IMR-90 (cell line): ENCODE measurements at regions of chr20 and their contacts with region 1.

Region 1: GRCh38 chr20:6178537-6178936 is 55.7 kb upstream of the FERMT1 start:
- DNase-seq: peak; percentile 51
- ATAC-seq: peak; percentile 56
- H3K4me3 ChIP-seq: no peak overlapping the region
- H3K27ac ChIP-seq: no peak overlapping the region
- H3K4me1 ChIP-seq: no peaks in the 10 kb centered on the region
- H3K27me3 ChIP-seq: no peaks in the 10 kb centered on the region; the same call in 1 of the 2 replicates
- CTCF ChIP-seq: peak; percentile 61
- POLR2A ChIP-seq: no peak
- RAD21 ChIP-seq: peak; percentile 62

Region 2: GRCh38 chr20:5652626-5653553 is 525.6 kb before region 1 on chr20:
- CTCF ChIA-PET with region 1: no interaction called
- POLR2A ChIA-PET with region 1: no interaction called
- dilution Hi-C with region 1: no loop called
- in situ Hi-C with region 1: no loop called
- intact Hi-C with region 1: no loop called
- DNase-seq: peak; percentile 98
- ATAC-seq: peak; percentile 25
- H3K4me3 ChIP-seq: no peak overlapping the region
- H3K27ac ChIP-seq: peak overlapping the region; percentile 85
- H3K4me1 ChIP-seq: peaks cover 25% of the 10 kb centered on the region
- H3K27me3 ChIP-seq: no peaks in the 10 kb centered on the region
- CTCF ChIP-seq: no peak
- POLR2A ChIP-seq: no peak
- RAD21 ChIP-seq: no peak

Region 3: DNA sequence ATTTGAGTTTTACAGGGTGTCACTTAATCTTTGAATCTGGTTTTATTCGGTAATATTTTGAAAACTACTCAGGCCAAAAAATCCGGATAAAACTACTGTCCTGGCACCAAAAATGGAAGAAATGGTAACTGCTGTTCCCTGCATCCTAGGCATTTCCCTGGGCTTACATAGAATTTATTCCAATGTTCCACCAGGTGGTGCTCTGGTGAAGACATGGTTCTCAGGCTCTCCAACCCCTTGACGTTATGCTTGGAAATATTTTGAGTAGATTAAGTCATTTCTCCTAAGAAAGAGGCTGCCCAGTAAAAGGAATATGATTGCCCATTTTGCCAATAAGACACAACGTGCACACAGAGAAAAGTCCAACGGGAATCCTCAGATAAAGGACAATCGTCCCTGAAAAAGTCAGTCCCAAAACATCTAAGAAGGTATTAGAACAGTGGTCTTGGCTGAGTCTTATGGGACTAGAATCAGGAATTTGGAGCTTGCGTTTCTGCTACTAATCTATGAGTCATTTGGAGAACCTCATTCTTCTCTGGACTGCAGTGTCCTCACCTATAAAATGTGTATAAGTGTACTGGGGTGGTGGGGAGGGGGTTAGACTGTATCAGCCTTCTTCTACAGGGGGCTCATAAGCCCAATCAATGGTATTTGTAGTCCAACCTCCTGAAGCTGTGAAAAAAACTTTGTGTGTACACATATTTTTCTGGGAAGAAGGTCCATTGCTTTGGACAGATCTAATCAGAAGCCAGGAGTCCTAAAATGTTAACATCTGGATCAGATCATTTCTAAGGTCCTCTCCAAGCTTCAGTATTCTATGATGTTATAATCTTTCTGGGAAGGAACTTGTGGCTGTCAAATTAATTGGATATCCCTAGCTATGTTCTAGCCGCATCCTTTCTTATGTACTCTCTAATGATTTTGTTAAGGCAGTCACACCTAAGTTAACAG is 457.9 kb after region 1 on chr20:
- CTCF ChIA-PET with region 1: no interaction called
- POLR2A ChIA-PET with region 1: no interaction called
- dilution Hi-C with region 1: no loop called
- in situ Hi-C with region 1: no loop called
- intact Hi-C with region 1: loop called (anchors 5 kb)
- DNase-seq: peak; percentile 69
- ATAC-seq: peak; percentile 87
- H3K4me3 ChIP-seq: no peak overlapping the region
- H3K27ac ChIP-seq: no peak overlapping the region
- H3K4me1 ChIP-seq: no peaks in the 10 kb centered on the region
- H3K27me3 ChIP-seq: peaks cover 8% of the 10 kb centered on the region
- CTCF ChIP-seq: peak; percentile 66
- POLR2A ChIP-seq: no peak
- RAD21 ChIP-seq: peak; percentile 64

Region 4: DNA sequence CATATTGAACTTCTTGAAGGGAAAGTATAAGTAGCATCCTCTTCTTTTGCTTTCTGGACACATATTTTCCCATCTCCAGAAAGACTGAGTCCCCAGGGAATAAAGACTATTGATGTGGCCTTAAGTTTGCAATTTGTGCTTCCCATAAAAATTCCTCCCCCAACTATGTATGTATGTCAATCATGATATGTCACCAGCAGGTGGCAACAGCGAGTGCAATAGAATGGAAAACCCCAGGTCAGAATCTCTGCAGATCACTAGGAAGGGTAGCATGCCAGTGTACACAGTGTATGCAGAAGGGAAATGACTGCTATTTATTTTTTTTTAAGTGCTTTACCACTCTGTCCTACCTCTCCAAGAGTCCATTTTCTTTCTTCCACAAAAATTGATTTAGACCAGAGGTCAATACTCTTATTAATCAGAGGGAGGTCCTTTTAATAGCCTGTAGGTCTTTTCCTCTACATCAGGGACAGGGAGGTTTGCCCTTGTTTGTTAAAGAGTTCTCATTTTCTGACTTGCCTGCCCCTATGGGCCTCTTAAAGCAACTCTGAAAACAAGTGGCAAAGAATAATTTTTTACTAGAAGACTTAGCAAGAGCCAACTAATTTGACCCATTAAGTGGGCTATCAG is 650.4 kb after region 1 on chr20:
- CTCF ChIA-PET with region 1: no interaction called
- POLR2A ChIA-PET with region 1: no interaction called
- dilution Hi-C with region 1: no loop called
- in situ Hi-C with region 1: no loop called
- intact Hi-C with region 1: loop called (anchors 10 kb)
- DNase-seq: peak; percentile 43
- ATAC-seq: peak; percentile 85
- H3K4me3 ChIP-seq: no peak overlapping the region
- H3K27ac ChIP-seq: no peak overlapping the region
- H3K4me1 ChIP-seq: no peaks in the 10 kb centered on the region
- H3K27me3 ChIP-seq: no peaks in the 10 kb centered on the region
- CTCF ChIP-seq: peak; percentile 63
- POLR2A ChIP-seq: no peak
- RAD21 ChIP-seq: peak; percentile 46

Region 5: DNA sequence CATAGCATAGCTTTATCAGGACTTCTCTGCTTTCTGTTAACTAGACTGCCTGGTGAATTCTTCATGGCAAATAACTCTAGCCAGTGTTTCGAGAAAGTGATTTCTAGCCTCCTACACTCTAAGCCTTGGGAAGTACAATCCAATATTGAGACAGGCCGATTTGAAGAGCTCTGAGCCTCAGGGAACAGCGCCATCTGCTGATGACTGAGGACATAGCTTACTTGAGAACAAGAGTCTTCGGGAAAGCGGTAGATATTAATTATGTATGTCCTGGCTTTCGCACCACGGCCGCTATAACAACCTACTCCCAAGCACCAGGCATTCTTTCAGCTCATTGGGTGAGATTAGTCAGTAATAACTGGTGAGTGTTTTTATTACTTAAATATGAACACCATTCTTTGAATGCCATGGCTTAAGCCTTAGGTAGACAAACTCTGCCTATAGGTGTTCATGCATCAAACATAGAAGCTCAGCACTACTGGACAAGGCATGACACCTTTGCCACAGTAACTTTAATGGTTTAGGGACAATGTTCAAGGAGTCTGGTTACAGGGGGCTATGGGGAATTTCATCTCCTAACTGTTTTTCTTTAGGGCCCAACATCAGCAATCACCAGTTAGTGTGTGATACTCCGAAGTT is 1107.5 kb after region 1 on chr20:
- CTCF ChIA-PET with region 1: no interaction called
- POLR2A ChIA-PET with region 1: no interaction called
- dilution Hi-C with region 1: no loop called
- in situ Hi-C with region 1: no loop called
- intact Hi-C with region 1: loop called (anchors 1 kb)
- DNase-seq: peak; percentile 75
- ATAC-seq: peak; percentile 80
- H3K4me3 ChIP-seq: no peak overlapping the region
- H3K27ac ChIP-seq: no peak overlapping the region
- H3K4me1 ChIP-seq: no peaks in the 10 kb centered on the region
- H3K27me3 ChIP-seq: no peaks in the 10 kb centered on the region
- CTCF ChIP-seq: peak; percentile 78
- POLR2A ChIP-seq: no peak
- RAD21 ChIP-seq: peak; percentile 66

Region 6: DNA sequence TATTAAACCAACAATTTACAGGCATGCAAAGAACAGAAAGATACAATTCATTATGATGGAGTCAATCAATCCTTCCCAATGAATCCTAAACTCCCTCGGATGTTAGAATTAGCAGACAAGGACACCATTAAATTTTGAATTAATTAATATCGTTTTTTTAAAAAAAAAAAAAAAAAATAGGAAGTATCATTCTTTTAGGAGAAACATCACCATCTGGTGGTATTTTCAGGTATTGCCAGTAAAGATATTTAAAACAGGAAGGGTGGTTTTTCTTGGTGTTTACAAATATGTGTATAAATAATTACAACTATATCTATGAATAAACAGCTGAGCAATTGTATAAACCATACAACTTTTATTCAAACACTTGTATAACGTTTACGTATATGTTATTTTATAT is 1197.4 kb after region 1 on chr20:
- CTCF ChIA-PET with region 1: no interaction called
- POLR2A ChIA-PET with region 1: no interaction called
- dilution Hi-C with region 1: no loop called
- in situ Hi-C with region 1: no loop called
- intact Hi-C with region 1: loop called (anchors 1 kb)
- DNase-seq: peak; percentile 17
- ATAC-seq: no peak
- H3K4me3 ChIP-seq: no peak overlapping the region
- H3K27ac ChIP-seq: no peak overlapping the region
- H3K4me1 ChIP-seq: no peaks in the 10 kb centered on the region
- H3K27me3 ChIP-seq: no peaks in the 10 kb centered on the region
- CTCF ChIP-seq: peak; percentile 55
- POLR2A ChIP-seq: no peak
- RAD21 ChIP-seq: peak; percentile 36; the same call in 1 of the 2 replicates